ENCODE measurements at regions of chr17 and their contacts with region 1.

Region 1: DNA sequence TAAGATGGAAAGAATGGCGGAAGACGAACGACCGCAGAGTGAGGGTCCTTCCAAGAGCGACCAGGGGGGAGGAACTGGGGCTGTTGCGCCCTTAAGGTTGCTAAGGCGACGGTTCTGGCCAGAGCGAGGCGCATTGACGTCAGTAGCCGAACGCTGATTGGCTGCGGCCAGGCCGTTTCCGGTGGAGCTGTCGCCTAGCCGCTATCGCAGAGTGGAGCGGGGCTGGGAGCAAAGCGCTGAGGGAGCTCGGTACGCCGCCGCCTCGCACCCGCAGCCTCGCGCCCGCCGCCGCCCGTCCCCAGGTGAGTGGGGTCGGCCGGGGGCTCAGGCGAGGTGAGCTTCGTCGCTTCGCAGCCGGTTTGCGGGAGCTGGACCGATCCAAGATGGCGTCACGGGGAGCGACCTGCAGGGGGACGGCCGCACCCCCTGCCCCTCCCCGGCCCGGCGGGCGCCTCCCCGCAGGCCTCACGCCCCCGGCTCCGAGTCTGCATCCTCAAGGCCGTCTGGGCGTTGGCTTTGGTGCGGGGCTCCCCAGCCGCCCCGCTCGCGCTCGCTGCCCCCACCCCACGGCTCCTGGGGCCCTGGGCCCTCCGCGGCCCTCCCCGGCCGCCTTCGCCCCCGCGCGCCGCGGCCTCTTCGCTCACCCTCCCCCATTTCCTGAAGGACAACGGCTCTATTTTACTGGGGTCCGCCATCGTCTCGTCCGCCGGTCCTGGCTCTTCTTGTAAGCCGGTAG is at the start of gene PRKAR1A:
- DNase-seq: peak; percentile 95
- ATAC-seq: peak; percentile 92 to 93
- total RNA-seq, gene PRKAR1A: 483 to 653 TPM

Region 2: DNA sequence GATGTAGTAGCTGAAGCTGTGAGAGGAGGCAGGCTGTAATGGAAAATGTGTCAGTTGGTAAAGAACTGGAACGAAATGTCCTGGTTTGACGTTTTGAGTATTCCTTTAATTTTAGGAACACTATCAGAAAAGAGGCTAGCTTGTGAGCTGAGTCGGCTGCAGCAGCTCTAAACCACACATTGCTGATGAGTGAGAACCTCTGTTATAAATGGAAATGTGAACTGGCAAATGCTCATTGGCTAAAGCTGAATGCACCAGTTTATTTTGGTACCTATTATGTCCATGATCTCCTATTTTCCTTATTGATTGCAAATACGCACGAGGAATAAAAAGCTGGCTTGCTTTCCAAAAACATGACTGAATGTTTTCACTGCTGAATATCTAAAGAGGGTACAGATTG is 44.1 kb before region 1 on chr17:
- intact Hi-C with region 1: loop called (anchors 5 kb)
- DNase-seq: no peak
- ATAC-seq: peak; percentile 75 to 84

Measured in left cardiac atrium (tissue), 4 donors.